ENCODE measurements at regions of chr7 and their contacts with region 1.

Region 1: GRCh38 chr7:54773472-54774399 is 14.7 kb upstream of the SEC61G start:
- DNase-seq: peak; percentile 57
- H3K4me3 ChIP-seq: peak overlapping the region; percentile 28
- H3K27ac ChIP-seq: no peak overlapping the region
- H3K27me3 ChIP-seq: no peaks in the 10 kb centered on the region
- CTCF ChIP-seq: peak; percentile 92

Region 2: DNA sequence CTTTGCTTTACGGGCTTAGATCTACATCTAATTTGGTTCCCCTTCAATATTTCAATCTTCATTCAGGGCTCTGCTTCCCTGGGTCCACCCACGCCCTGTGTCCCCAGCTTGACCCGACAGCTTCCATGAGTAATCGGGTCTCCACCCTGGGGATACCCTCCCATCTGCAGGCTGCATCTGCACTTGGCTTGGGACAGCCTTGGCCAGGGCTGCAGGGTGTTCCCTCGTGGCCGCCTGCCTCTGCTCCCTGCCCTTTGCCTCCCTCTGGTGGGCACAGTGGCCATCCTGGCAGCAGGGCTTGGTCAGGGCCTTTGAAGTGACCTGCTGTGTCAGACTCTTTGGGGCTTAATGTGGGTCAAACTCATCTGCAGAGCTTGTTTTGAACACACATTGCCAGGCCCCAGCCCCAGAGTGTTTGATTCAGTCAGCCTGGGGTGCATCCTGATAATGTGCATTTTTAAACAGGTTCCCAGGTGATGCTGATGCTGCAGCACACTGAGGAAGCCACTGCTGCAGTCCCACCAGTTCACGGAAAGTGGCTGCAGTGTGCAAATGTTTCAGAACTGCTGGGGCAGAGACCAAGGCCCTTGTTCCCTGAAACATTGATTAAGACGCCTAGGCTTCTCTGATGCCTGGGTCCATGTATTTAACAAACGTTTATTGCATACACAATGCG is 65.9 kb after region 1 on chr7:
- CTCF ChIA-PET with region 1: interaction called, 40 read pairs
- POLR2A ChIA-PET with region 1: no interaction called
- DNase-seq: no peak
- H3K4me3 ChIP-seq: no peak overlapping the region
- H3K27ac ChIP-seq: no peak overlapping the region
- H3K27me3 ChIP-seq: no peaks in the 10 kb centered on the region
- CTCF ChIP-seq: peak; percentile 67

Region 3: DNA sequence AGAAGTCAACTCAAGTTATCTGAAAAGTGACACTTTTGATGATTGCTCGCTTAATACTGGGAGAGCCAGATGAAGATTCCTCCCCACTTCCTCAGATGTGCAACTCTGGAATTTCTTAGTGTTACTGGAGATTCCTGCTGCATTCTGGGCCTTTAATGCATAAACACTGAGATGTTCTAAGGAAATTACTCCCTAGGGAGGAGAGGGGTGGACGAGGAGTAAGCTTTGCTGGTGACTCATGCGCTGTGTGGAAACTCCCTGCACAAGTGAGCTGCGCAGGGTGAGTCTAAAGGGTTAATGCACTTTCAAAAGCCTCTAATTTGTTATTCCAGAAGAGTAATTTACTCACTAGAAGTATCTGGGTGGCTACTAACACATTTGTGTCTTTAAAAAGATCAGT is 291.3 kb after region 1 on chr7:
- CTCF ChIA-PET with region 1: interaction called, 27 read pairs
- POLR2A ChIA-PET with region 1: no interaction called
- DNase-seq: peak; percentile 93
- H3K4me3 ChIP-seq: no peak overlapping the region
- H3K27ac ChIP-seq: peak overlapping the region; percentile 98
- H3K27me3 ChIP-seq: no peaks in the 10 kb centered on the region
- CTCF ChIP-seq: no peak

Region 4: GRCh38 chr7:55132890-55133551 is 359.3 kb after region 1 on chr7:
- CTCF ChIA-PET with region 1: interaction called, 16 read pairs
- POLR2A ChIA-PET with region 1: no interaction called
- DNase-seq: peak; percentile 98
- H3K4me3 ChIP-seq: peak overlapping the region; percentile 42
- H3K27ac ChIP-seq: peak overlapping the region; percentile 100
- H3K27me3 ChIP-seq: no peaks in the 10 kb centered on the region
- CTCF ChIP-seq: no peak

Region 5: DNA sequence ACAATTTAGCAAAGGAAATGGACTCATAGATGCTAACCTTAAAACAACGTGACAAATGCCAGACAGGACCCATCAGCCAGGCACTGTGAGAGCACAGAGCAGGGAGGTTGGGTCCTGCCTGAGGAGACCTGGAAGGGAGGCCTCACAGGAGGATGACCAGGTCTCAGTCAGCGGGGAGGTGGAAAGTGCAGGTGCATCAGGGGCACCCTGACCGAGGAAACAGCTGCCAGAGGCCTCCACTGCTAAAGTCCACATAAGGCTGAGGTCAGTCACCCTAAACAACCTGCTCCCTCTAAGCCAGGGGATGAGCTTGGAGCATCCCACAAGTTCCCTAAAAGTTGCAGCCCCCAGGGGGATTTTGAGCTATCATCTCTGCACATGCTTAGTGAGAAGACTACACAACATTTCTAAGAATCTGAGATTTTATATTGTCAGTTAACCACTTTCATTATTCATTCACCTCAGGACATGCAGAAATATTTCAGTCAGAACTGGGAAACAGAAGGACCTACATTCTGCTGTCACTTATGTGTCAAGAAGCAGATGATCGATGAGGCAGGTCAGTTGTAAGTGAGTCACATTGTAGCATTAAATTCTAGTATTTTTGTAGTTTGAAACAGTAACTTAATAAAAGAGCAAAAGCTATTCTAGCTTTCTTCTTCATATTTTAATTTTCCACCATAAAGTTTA is 433.8 kb after region 1 on chr7:
- CTCF ChIA-PET with region 1: interaction called, 14 read pairs
- POLR2A ChIA-PET with region 1: no interaction called
- DNase-seq: no peak
- H3K4me3 ChIP-seq: no peak overlapping the region
- H3K27ac ChIP-seq: no peak overlapping the region
- H3K27me3 ChIP-seq: no peaks in the 10 kb centered on the region
- CTCF ChIP-seq: no peak

Region 6: GRCh38 chr7:55260671-55261385 is 487.1 kb after region 1 on chr7:
- CTCF ChIA-PET with region 1: interaction called, 360 read pairs
- POLR2A ChIA-PET with region 1: interaction called, 4 read pairs
- DNase-seq: no peak
- H3K4me3 ChIP-seq: no peak overlapping the region
- H3K27ac ChIP-seq: no peak overlapping the region
- H3K27me3 ChIP-seq: peaks cover 10% of the 10 kb centered on the region
- CTCF ChIP-seq: no peak

Region 7: DNA sequence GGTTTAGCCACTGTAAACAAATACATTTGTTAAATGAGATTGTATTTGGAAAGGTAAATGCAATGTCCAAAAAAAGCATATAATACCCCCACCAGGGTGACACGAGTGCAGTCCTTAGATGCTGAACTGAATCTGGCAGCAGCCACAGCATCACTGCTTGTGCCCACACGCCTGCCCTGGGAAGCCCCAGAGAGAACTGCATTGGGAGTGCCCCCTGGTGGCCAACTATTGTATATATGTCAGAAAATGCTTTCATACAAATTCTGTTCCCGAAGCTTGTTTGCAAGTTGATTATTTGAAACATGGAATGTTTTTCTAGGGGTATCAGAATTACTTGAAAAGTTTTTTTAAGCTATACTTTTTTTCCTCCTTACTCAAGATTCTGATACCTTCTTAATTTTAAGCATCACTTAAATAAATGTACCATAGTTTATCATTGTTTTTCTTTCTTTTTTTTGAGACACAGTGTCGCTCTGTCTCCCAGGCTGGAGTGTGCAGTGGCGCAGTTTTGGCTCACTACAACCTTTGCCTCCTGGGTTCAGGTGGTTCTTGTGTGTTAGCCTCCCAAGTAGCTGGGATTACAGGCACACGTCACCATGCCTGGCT is 641.5 kb after region 1 on chr7:
- CTCF ChIA-PET with region 1: interaction called, 13 read pairs
- POLR2A ChIA-PET with region 1: no interaction called
- DNase-seq: peak; percentile 48
- H3K4me3 ChIP-seq: no peak overlapping the region
- H3K27ac ChIP-seq: no peak overlapping the region
- H3K27me3 ChIP-seq: no peaks in the 10 kb centered on the region
- CTCF ChIP-seq: peak; percentile 84